ENCODE measurements at regions of chr6 and their contacts with region 1.

Region 1: DNA sequence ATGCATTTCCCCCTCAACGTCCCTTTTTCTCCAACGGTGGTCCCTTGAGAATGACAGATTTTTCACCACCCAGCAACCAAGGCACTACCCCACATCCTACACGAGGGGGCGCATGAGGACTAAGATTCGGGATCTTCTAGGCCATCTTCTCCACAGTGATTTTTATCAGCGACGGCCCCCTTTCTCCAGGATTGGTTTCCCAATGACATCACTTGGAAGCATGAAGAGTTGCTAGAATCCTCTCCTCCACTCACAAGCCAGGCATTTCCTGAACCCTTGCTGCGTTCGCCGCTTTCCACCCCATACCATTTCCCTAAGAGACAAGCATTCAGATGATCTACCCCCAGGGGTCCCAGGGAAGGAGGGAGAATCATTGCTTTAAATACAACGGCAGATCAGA is 252.0 kb downstream of the HIVEP2 start:
- DNase-seq: no peak
- H3K4me3 ChIP-seq: peak overlapping the region in 1 of 4 donors; percentile 14
- H3K27ac ChIP-seq: no peak overlapping the region
- H3K4me1 ChIP-seq: peaks cover 0 to 34% (median 20%) of the 10 kb centered on the region in 4 donors
- H3K27me3 ChIP-seq: no peaks in the 10 kb centered on the region
- CTCF ChIP-seq: peak; percentile 91 to 98 (median 93)
- EP300 ChIP-seq: no peak
- POLR2A ChIP-seq: no peak

Region 2: DNA sequence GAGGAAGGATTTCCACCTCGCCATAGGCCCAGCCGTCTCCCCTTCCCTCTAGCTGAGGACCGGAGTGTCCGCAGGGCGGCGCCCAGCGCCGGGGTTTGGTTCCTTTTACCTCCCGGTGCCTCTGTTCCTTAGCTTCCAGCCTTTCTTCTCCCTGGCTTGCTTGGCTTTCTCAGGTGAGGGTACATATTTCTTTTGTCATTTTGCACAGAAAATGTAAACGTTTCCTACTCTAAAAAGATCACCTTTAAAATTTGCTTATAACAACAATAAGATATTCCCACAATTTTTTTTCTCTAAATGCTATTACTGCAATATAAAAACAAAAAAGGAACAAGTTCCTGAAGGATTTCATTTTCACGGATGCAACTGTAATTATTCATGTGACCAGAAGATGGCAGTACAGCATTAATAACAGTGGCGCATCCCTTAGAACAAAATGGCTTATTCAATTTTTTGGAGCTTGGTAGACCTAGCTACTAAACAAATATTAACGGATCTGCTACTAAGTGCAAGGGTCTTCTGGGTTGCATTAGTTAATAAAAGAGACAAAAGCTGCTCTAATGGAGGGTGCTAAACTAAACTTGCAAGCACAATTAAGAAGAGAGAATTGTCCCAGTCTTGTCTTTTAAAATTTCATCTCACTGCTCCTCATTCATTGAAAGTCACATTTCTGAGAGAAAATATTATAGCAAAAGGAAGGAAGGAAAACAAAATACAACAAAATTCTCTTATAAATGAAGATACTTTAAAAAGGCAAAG is 218.2 kb before region 1 on chr6:
- intact Hi-C with region 1: loop called (anchors 10 kb)
- DNase-seq: no peak
- H3K4me3 ChIP-seq: no peak overlapping the region
- H3K27ac ChIP-seq: no peak overlapping the region
- H3K4me1 ChIP-seq: peaks cover 0 to 4% (median 0%) of the 10 kb centered on the region in 4 donors
- H3K27me3 ChIP-seq: no peaks in the 10 kb centered on the region
- CTCF ChIP-seq: peak; percentile 77 to 84 (median 81)
- EP300 ChIP-seq: no peak
- POLR2A ChIP-seq: no peak

Region 3: DNA sequence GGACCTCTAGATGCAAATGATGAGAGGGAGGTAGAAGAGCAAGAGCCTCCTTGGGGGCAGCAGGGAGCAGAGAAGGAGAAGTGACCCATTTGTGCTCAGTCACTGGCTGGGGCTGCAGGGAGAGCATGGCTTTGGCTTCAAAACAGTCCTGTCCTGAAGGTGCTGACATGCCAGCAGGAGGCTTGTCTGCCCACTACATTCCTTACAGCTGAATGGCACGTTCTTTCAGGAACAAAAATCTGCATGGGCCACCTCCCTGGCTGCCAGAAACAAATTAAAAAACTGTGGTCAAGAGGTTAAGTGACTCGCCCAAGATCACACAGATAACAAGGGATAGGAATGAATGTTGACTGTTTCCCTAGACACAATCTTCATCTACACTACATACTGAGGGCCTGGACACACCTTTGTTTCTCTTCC is 63.3 kb after region 1 on chr6:
- intact Hi-C with region 1: no loop called
- DNase-seq: no peak
- H3K4me3 ChIP-seq: no peak overlapping the region
- H3K27ac ChIP-seq: no peak overlapping the region
- H3K4me1 ChIP-seq: no peaks in the 10 kb centered on the region
- H3K27me3 ChIP-seq: no peaks in the 10 kb centered on the region
- CTCF ChIP-seq: no peak
- EP300 ChIP-seq: no peak
- POLR2A ChIP-seq: no peak

Region 4: GRCh38 chr6:142786476-142786875 is 93.5 kb after region 1 on chr6:
- intact Hi-C with region 1: no loop called
- DNase-seq: no peak
- H3K4me3 ChIP-seq: no peak overlapping the region
- H3K27ac ChIP-seq: no peak overlapping the region
- H3K4me1 ChIP-seq: peaks cover 0 to under 1% (median 0%) of the 10 kb centered on the region in 4 donors
- H3K27me3 ChIP-seq: no peaks in the 10 kb centered on the region
- CTCF ChIP-seq: no peak
- EP300 ChIP-seq: no peak
- POLR2A ChIP-seq: no peak

Region 5: DNA sequence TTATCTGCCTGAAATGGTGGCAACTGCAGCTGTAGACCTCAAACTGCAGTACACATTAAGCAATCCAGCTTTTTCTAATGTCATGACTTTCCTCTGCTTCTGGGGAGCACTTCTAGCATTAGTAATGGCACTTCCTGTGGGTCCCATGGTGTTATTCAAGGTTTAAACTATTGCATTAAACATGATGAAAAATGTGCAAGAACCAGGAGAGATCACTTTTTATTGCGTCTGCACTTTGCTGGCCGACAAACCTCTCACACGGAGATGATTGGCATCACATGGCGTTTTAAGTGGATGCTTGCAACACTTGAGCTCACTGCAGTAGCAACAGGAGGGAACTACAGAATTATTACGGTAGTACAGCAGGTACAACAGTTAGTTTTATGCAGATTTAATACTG is 103.6 kb after region 1 on chr6:
- intact Hi-C with region 1: no loop called
- DNase-seq: no peak
- H3K4me3 ChIP-seq: no peak overlapping the region
- H3K27ac ChIP-seq: no peak overlapping the region
- H3K4me1 ChIP-seq: peaks cover 0 to 8% (median 3%) of the 10 kb centered on the region in 4 donors
- H3K27me3 ChIP-seq: no peaks in the 10 kb centered on the region
- CTCF ChIP-seq: no peak
- EP300 ChIP-seq: no peak
- POLR2A ChIP-seq: no peak

Region 6: GRCh38 chr6:142946181-142946923 is 253.4 kb after region 1 on chr6:
- intact Hi-C with region 1: loop called (anchors 5 kb)
- DNase-seq: peak; percentile 99
- H3K4me3 ChIP-seq: peak overlapping the region; percentile 72 to 98 (median 94)
- H3K27ac ChIP-seq: peak overlapping the region; percentile 96 to 100 (median 98)
- H3K4me1 ChIP-seq: peaks cover 17 to 34% (median 32%) of the 10 kb centered on the region in 4 donors
- H3K27me3 ChIP-seq: no peaks in the 10 kb centered on the region
- CTCF ChIP-seq: no peak
- EP300 ChIP-seq: peak; percentile 8
- POLR2A ChIP-seq: peak; percentile 93

Region 7: DNA sequence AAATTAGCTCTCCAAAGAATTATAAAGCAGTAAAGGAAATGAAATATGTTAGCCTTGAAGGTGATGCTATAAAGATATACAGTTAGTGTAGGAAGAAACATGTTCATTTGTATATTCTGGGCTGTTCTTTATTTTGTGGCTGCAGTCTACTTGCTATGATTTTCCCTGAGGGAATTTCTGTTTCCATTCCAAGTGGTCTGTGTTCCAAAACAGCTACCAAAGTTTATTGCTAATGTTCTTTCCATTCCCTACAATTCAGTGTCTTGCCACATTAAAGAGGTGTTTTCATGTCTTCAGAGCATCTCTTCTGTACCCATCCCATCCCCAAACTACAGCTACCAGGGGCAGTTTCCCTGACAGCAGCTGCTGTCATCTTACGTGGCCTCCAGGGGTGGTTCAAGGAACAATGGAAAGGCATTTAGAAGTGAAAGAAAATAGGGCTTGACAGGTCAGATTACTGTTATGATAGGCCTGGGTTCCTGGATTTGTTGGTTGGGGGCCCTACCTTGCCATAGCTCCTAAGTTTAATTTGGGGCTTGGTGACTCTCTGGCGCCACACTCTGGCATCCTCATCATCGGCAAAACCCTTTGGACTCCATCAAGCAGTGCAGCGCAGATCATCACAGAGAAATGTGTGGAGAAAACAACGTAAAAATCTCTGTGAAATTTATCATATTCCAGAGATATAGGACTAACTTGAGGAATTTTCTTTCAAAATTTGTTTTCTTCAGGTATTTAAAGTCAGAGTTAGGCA is 333.9 kb after region 1 on chr6:
- intact Hi-C with region 1: loop called (anchors 2 kb)
- DNase-seq: no peak
- H3K4me3 ChIP-seq: no peak overlapping the region
- H3K27ac ChIP-seq: no peak overlapping the region
- H3K4me1 ChIP-seq: peaks cover 0 to 4% (median 0%) of the 10 kb centered on the region in 4 donors
- H3K27me3 ChIP-seq: no peaks in the 10 kb centered on the region
- CTCF ChIP-seq: peak; percentile 49 to 72 (median 62)
- EP300 ChIP-seq: no peak
- POLR2A ChIP-seq: no peak

Region 8: DNA sequence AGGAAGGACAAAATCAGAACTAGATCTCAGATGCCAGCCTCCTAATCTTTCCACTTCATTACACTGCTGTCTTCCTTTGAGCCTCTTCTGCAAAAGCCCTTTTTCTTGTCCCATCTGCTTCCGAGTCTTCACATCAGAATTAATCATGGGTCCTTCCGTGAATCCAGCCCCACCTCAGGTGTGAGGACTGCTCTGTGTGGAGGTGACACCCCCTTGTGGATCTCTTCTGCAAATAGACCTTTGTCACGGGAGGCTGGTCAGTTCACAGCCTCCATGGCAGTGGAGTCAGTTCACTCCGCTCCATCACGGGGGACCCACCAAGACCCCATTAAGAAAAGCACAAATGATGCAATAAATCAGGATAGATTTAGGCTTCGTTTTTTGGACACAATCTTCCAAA is 586.4 kb after region 1 on chr6:
- intact Hi-C with region 1: loop called (anchors 5 kb)
- DNase-seq: no peak
- H3K4me3 ChIP-seq: no peak overlapping the region
- H3K27ac ChIP-seq: no peak overlapping the region
- H3K4me1 ChIP-seq: peaks cover 0 to 6% (median 0%) of the 10 kb centered on the region in 4 donors
- H3K27me3 ChIP-seq: no peaks in the 10 kb centered on the region
- CTCF ChIP-seq: peak; percentile 29 to 54 (median 37)
- EP300 ChIP-seq: no peak
- POLR2A ChIP-seq: no peak

Region 9: DNA sequence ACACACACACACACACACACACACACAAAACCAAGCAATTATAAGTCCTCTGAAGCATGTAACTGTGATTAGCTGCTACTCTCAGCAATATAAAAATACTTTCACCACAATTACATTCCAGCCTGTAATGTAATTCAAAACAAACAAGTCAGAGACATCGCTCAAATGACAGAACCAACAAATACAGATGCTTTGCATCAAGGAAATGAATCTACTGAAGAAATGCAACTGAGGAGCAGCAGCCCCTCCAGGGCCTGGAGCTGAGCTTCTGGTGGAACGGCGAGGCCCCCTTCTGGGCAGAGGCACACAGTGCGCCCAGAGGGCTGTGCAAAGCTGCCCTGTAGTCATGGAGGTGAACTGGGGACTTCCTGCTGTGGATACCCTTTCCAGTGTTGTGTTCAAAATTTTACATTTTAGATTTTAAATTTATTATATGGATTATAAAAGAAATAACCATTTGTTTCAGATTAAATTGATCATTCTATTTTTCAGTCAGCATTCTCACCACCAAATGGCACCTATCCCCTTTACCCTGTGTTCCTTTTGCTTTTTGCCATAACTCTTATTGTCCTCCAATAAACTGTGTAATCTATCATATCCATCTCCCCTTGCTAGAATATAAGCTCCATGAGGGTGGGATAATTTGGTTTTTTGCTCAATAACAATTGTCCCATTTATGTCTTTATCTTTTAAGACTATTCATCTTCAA is 734.3 kb after region 1 on chr6:
- intact Hi-C with region 1: loop called (anchors 5 kb)
- DNase-seq: no peak
- H3K4me3 ChIP-seq: no peak overlapping the region
- H3K27ac ChIP-seq: no peak overlapping the region
- H3K4me1 ChIP-seq: no peaks in the 10 kb centered on the region
- H3K27me3 ChIP-seq: no peaks in the 10 kb centered on the region
- CTCF ChIP-seq: peak; percentile 85 to 95 (median 85)
- EP300 ChIP-seq: no peak
- POLR2A ChIP-seq: no peak